ENCODE measurements at regions of chr2 and their contacts with region 1.

Region 1: GRCh38 chr2:11583840-11584524 is 50.1 kb downstream of the GREB1 start:
- DNase-seq: peak; percentile 95
- H3K4me3 Mint-ChIP-seq: no peak overlapping the region
- H3K27ac Mint-ChIP-seq: no peak overlapping the region
- H3K4me1 Mint-ChIP-seq: peaks cover 11% of the 10 kb centered on the region
- H3K27me3 Mint-ChIP-seq: peaks cover 19% of the 10 kb centered on the region

Region 2: DNA sequence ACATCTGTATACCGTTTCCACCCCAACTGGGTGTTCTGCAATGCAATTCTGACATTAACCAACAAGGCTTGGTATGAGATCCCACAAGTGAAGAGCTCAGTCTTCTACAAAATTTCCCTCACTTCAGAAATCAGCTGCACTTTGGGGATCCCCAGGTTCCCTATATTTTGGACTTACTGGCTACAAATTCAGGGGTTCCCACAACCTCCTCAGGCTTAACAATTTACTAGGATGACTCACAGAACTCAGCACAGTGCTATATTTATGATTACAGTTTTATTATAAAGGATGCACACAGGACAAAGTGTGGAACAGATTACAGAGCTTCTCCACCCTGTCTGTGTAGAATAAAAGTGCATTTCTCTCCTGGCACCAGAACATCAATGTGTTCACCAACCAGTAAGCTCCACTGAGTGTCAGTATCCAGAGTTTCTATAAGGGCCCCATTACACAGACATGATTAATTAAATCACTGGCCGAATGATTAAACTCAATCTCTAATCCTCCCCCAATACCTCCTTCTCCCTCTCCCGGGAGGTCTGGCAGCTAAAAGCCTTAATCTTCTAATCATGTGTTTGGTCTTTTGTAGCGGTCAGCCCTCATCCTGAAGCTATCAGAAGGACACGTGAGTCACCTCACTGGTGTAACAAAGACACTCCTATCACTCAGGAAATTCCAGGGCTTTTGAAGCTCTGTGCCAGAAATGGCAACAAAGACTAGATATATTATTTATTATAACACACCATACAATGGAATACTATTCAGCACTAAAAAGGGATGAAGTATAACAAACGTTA is 344.1 kb before region 1 on chr2:
- CTCF ChIA-PET with region 1: interaction called, 4 read pairs
- POLR2A ChIA-PET with region 1: no interaction called
- intact Hi-C with region 1: loop called (anchors 5 kb)
- DNase-seq: no peak
- H3K4me3 Mint-ChIP-seq: no peak overlapping the region
- H3K27ac Mint-ChIP-seq: no peak overlapping the region
- H3K4me1 Mint-ChIP-seq: peaks cover 12% of the 10 kb centered on the region
- H3K27me3 Mint-ChIP-seq: no peaks in the 10 kb centered on the region

Region 3: GRCh38 chr2:11465497-11466406 is 118.2 kb before region 1 on chr2 and contains the start of gene E2F6:
- CTCF ChIA-PET with region 1: interaction called, 29 read pairs
- POLR2A ChIA-PET with region 1: interaction called, 6 read pairs
- intact Hi-C with region 1: loop called (anchors 1 kb)
- DNase-seq: peak; percentile 92
- H3K4me3 Mint-ChIP-seq: peak within 1 kb of the TSS; percentile 91
- H3K27ac Mint-ChIP-seq: peak within 1 kb of the TSS; percentile 83
- H3K4me1 Mint-ChIP-seq: peaks cover 36% of the 10 kb centered on the region
- H3K27me3 Mint-ChIP-seq: no peaks in the 10 kb centered on the region
- total RNA-seq, gene E2F6: 9.9 to 10.3 TPM

Region 4: DNA sequence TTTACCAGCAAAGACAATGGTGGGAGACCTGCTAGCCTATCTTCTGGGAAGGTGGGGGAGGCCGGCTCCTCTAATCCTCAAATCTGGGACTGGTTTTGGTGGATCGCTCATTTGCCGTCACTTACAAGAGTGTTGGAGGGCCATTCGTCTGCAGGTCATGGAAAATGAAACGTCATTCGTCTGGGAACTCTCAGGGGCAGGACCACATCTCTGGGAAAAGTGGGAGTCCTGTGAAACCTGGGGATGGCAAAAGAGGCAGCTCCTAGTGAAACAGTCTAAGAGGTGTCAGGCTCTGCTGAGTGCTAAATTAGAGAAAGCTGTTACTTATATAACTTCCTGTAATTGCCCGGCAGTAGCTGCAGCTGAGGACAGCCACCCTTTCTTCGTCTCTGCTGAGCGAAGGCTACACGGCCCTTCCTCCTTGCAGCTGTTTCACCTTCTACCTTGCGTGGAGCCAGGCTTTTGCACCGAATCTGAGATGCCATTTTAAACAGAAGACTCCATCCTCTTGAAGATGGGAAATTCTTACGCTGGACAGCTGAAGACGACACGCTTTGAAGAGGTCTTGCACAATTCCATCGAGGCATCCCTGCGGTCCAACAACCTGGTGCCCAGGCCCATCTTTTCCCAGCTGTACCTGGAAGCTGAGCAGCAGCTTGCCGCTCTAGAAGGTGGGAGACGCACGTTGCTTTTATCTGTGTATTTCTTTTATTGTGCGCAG is 27.7 kb before region 1 on chr2:
- CTCF ChIA-PET with region 1: interaction called, 10 read pairs
- POLR2A ChIA-PET with region 1: no interaction called
- intact Hi-C with region 1: no loop called
- DNase-seq: no peak
- H3K4me3 Mint-ChIP-seq: no peak overlapping the region
- H3K27ac Mint-ChIP-seq: no peak overlapping the region
- H3K4me1 Mint-ChIP-seq: peaks cover 5% of the 10 kb centered on the region
- H3K27me3 Mint-ChIP-seq: peaks cover 34% of the 10 kb centered on the region

Region 5: GRCh38 chr2:11573418-11574175 is 10.4 kb before region 1 on chr2:
- CTCF ChIA-PET with region 1: interaction called, 13 read pairs
- POLR2A ChIA-PET with region 1: no interaction called
- intact Hi-C with region 1: no loop called
- DNase-seq: no peak
- H3K4me3 Mint-ChIP-seq: no peak overlapping the region
- H3K27ac Mint-ChIP-seq: no peak overlapping the region
- H3K4me1 Mint-ChIP-seq: no peaks in the 10 kb centered on the region
- H3K27me3 Mint-ChIP-seq: peaks cover 5% of the 10 kb centered on the region

Region 6: DNA sequence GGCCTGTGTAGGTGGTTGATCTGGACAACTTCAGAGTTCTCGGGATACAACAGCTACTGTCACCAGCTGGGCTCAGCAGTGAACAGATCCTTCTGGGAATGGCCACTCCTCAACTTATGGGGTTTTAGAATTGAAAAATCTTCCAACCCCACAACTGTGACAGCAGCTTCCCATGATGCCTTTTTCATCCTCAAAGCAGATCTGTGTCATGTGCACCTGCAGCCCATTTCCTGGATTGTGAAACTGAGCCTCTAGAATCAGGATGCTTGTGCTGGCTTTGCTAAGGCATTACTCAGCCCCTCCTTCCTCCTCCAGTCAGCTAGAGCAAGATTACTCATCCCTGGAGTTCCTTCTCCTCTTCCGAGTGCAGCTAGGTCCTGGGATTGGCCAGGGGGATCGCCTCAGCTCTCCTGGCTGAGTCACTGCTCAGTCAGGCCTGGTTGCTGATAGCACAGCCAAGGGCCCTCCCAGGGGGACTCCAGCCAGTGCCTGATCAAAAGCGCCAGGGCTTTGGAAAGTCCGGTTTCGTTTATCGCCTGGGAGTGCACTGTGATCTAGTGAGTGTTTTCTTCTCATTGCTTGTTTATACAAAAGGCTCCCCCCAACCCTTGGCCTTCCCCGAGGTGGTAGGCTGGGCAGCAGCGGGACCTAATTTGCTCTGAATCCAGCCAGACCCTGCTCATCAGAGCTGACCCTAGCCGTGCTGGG is 160.0 kb after region 1 on chr2:
- CTCF ChIA-PET with region 1: interaction called, 3 read pairs
- POLR2A ChIA-PET with region 1: no interaction called
- intact Hi-C with region 1: loop called (anchors 2 kb)
- DNase-seq: peak; percentile 93
- H3K4me3 Mint-ChIP-seq: peak overlapping the region; percentile 48
- H3K27ac Mint-ChIP-seq: peak overlapping the region; percentile 77
- H3K4me1 Mint-ChIP-seq: peaks cover 54% of the 10 kb centered on the region
- H3K27me3 Mint-ChIP-seq: no peaks in the 10 kb centered on the region